Transverse colon (tissue), 4 donors: ENCODE measurements at regions of chr17 and their contacts with region 1.

Region 1: DNA sequence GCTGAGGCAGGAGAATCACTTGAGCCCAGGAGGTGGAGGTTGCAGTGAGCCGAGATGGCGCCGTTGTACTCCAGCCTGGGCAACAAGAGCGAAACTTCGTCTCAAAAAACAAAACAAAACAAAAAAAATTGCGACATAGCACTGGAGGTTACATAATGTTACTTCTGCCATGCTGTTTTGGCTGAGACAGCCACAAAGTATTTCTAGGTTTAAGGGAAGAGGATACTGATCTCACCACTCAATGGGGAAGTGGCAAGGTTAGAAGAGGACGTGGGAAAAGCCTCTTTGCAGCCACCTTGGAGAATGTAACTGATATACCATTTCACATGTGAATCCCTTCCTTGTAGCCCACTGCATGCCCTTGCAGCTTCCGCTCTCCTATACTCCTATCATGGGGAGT is 131.2 kb upstream of the NLRP1 start:
- DNase-seq: no peak
- H3K4me3 ChIP-seq: no peak overlapping the region
- H3K27ac ChIP-seq: no peak overlapping the region
- H3K4me1 ChIP-seq: no peaks in the 10 kb centered on the region
- H3K27me3 ChIP-seq: peaks cover 46% of the 10 kb centered on the region
- CTCF ChIP-seq: no peak
- EP300 ChIP-seq: no peak
- POLR2A ChIP-seq: no peak

Region 2: DNA sequence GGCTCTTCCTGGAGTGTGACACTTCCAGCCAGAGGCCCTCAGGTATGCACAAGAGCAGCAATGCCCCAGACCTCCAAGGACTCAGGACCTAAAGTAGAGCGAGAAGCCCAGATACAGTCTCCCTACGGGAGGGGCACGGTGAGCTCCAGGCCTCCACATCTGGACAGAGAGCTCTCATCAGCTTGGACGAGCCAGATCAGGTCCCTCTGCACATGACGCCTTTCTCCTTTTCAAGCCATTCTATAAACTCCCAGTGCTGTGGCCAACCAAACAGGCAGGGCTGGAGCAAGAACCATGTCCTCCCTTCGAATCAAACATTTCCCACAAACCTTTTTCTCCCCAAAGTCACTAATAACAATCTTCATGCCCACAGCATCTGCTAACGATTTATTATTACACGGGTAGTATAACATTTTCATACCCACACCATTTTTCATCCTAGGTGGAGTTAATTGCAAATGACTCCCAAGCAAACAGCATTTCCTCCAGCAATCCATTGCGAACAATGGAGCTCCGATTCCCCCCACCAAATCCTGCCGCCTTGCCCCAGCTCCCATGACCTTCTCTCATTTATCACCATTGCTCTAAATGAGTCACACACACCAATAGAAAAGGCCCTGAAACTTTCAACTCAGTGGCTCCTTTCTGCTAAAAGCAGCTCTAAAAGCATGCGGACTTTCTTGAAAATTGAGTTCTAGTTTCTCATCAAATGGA is 106.9 kb before region 1 on chr17:
- in situ Hi-C with region 1: loop called in 1 of 4 experiments (anchors 10 kb)
- intact Hi-C with region 1: no loop called
- DNase-seq: no peak
- H3K4me3 ChIP-seq: no peak overlapping the region
- H3K27ac ChIP-seq: no peak overlapping the region
- H3K4me1 ChIP-seq: no peaks in the 10 kb centered on the region
- H3K27me3 ChIP-seq: no peaks in the 10 kb centered on the region
- CTCF ChIP-seq: no peak
- EP300 ChIP-seq: no peak
- POLR2A ChIP-seq: no peak

Region 3: GRCh38 chr17:5888811-5889210 is 173.3 kb after region 1 on chr17:
- in situ Hi-C with region 1: no loop called
- intact Hi-C with region 1: no loop called
- DNase-seq: no peak
- H3K4me3 ChIP-seq: no peak overlapping the region
- H3K27ac ChIP-seq: no peak overlapping the region
- H3K4me1 ChIP-seq: no peaks in the 10 kb centered on the region
- H3K27me3 ChIP-seq: peaks cover 29% of the 10 kb centered on the region
- CTCF ChIP-seq: no peak
- EP300 ChIP-seq: no peak
- POLR2A ChIP-seq: no peak